ENCODE measurements at regions of chr17 and their contacts with region 1.

Region 1: DNA sequence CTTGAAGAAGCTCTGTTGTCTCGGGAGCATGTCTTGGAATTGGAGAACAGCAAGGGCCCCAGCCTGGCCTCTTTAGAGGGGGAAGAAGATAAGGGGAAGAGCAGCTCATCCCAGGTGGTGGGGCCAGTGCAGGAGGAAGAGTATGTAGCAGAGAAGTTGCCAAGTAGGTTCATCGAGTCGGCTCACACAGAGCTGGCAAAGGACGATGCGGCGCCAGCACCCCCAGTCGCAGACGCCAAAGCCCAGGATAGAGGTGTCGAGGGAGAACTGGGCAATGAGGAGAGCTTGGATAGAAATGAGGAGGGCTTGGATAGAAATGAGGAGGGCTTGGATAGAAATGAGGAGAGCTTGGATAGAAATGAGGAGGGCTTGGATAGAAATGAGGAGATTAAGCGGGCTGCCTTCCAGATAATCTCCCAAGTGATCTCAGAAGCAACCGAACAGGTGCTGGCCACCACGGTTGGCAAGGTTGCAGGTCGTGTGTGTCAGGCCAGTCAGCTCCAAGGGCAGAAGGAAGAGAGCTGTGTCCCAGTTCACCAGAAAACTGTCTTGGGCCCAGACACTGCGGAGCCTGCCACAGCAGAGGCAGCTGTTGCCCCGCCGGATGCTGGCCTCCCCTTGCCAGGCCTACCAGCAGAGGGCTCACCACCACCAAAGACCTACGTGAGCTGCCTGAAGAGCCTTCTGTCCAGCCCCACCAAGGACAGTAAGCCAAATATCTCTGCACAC is 21.2 kb downstream of the AKAP1 start:
- DNase-seq: peak in 1 of 2 experiments; percentile 70
- H3K4me3 ChIP-seq: no peak overlapping the region
- H3K27ac ChIP-seq: no peak overlapping the region
- H3K4me1 ChIP-seq: peaks cover 4 to 33% (median 18%) of the 10 kb centered on the region in 4 experiments; a peak in 6 of 7 replicates
- H3K27me3 ChIP-seq: no peaks in the 10 kb centered on the region
- CTCF ChIP-seq: peak; percentile 45 to 80 (median 79)
- EP300 ChIP-seq: no peak
- POLR2A ChIP-seq: no peak
- RAD21 ChIP-seq: peak; percentile 36 to 55

Region 2: GRCh38 chr17:57001548-57001947 is 104.7 kb before region 1 on chr17:
- CTCF ChIA-PET with region 1: interaction called, 112 read pairs
- POLR2A ChIA-PET with region 1: no interaction called
- DNase-seq: no peak
- H3K4me3 ChIP-seq: no peak overlapping the region
- H3K27ac ChIP-seq: no peak overlapping the region
- H3K4me1 ChIP-seq: peaks cover 0 to 4% (median 0%) of the 10 kb centered on the region in 4 experiments; a peak in 1 of 7 replicates
- H3K27me3 ChIP-seq: no peaks in the 10 kb centered on the region
- CTCF ChIP-seq: peak; percentile 46 to 55 (median 54)
- EP300 ChIP-seq: no peak
- POLR2A ChIP-seq: no peak
- RAD21 ChIP-seq: peak; percentile 69 to 79

Region 3: GRCh38 chr17:57045868-57046704 is 60.2 kb before region 1 on chr17:
- CTCF ChIA-PET with region 1: interaction called, 58 read pairs
- POLR2A ChIA-PET with region 1: interaction called, 3 read pairs
- DNase-seq: no peak
- H3K4me3 ChIP-seq: no peak overlapping the region
- H3K27ac ChIP-seq: no peak overlapping the region
- H3K4me1 ChIP-seq: peaks cover 0 to 2% (median under 1%) of the 10 kb centered on the region in 4 experiments; a peak in 2 of 7 replicates
- H3K27me3 ChIP-seq: no peaks in the 10 kb centered on the region
- CTCF ChIP-seq: no peak
- EP300 ChIP-seq: no peak
- POLR2A ChIP-seq: no peak
- RAD21 ChIP-seq: no peak

Region 4: DNA sequence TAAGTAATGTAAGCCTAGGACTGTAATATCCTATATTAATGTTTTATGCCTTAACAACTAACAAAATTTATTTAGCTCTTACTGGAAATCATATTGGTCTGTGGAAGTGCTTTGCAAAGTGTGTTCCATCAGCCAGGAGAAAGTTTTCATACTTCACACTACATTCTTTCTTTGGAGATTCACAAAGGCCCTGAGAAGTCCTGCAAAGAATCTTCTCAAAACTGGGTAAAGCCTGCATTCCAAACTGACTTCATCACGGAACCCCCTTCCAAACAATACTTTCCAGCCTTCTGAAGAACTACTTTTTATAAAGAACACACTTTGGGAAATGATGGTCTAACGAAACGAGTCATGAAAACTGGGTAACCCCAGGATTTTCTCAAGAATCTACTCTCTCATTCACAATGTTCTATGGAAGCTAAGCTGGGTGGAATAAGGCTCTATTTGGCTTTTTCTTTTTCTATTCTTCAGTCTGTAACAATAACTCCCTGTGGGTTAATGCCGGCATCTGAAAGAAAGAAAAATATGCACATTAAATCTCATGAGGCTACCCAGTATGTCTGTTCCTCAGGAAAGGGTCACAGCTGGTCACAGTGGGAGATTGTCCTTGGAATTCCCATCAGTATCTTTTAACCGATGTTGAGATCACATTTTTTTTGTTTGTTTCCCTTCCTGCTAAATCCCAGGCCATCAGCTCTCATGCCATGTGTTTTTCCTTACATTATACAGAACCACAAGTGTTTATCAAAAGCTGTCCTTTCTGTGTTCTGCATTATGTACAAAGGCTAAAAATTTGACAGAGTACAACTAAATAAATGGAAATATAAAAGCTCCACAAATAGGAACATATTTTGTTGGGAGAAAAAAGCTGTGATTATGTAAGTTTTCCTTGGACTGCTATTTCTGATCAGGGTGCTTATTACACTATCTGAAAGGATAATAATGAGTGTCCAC is 34.0 kb before region 1 on chr17:
- CTCF ChIA-PET with region 1: interaction called, 15 read pairs
- POLR2A ChIA-PET with region 1: no interaction called
- DNase-seq: no peak
- H3K4me3 ChIP-seq: 0 out of 8 replicates have a peak overlapping the region, but pooled peaks of 1 of the 4 experiments have one; percentile 9
- H3K27ac ChIP-seq: no peak overlapping the region; the same call in 1 of the 2 replicates
- H3K4me1 ChIP-seq: peaks cover 0 to 15% (median 8%) of the 10 kb centered on the region in 4 experiments; a peak in 5 of 7 replicates
- H3K27me3 ChIP-seq: no peaks in the 10 kb centered on the region
- CTCF ChIP-seq: no peak
- EP300 ChIP-seq: no peak
- POLR2A ChIP-seq: no peak
- RAD21 ChIP-seq: no peak

Region 5: DNA sequence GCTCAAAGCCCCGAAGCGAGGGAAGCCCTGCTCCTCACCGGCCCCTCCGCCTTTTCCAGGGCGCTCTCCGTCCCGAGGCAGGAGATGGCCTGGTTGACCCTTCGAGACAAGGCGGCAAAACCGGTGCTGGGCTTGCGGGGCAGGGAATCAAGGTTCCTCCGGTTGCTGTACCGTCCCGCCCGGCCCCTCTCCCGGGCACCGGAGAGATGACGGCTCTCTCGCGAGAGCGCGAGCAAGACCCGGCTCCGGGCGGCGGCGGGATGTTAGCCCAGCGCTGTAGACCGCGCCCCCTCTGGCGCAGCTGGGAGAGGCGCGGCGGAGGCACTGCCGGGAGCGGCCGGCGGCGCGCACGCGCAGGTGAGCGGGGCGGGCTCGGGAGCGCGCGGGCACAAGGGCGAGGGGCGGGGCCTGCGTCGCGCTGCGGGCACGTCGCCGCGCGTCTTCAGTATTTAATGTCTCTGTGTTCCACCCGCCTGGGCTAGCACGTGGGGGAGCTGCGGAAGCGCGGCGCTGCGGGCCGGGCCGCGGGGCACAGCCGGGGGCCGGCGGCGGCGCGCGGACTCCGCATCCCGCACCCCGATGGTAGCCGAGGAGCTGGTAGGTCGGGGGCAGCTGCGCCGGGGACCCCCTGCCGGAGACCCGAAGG is 21.3 kb before region 1 on chr17 and contains the start of gene AKAP1:
- CTCF ChIA-PET with region 1: interaction called, 34 read pairs
- POLR2A ChIA-PET with region 1: interaction called, 13 read pairs
- DNase-seq: peak; percentile 80 to 95
- H3K4me3 ChIP-seq: peak within 1 kb of the TSS; percentile 68 to 86 (median 84)
- H3K27ac ChIP-seq: peak within 1 kb of the TSS; percentile 92
- H3K4me1 ChIP-seq: peaks cover 5 to 21% (median 15%) of the 10 kb centered on the region in 4 experiments; a peak in 6 of 7 replicates
- H3K27me3 ChIP-seq: no peaks in the 10 kb centered on the region; a peak in 1 of 7 replicates
- CTCF ChIP-seq: peak; percentile 38 to 51 (median 43)
- EP300 ChIP-seq: no peak
- POLR2A ChIP-seq: peak; percentile 33 to 83
- RAD21 ChIP-seq: peak; percentile 31 to 53; a peak in 3 of 4 replicates
- total RNA-seq, gene AKAP1: 110 and 120 TPM in 2 replicates

Region 6: GRCh38 chr17:57092171-57092570 is 14.1 kb before region 1 on chr17:
- CTCF ChIA-PET with region 1: interaction called, 57 read pairs
- POLR2A ChIA-PET with region 1: interaction called, 13 read pairs
- DNase-seq: no peak
- H3K4me3 ChIP-seq: no peak overlapping the region
- H3K27ac ChIP-seq: no peak overlapping the region
- H3K4me1 ChIP-seq: peaks cover 18 to 46% (median 36%) of the 10 kb centered on the region in 4 experiments
- H3K27me3 ChIP-seq: no peaks in the 10 kb centered on the region
- CTCF ChIP-seq: no peak
- EP300 ChIP-seq: no peak
- POLR2A ChIP-seq: no peak
- RAD21 ChIP-seq: no peak

Region 7: GRCh38 chr17:57121338-57122042 is 15.2 kb after region 1 on chr17:
- CTCF ChIA-PET with region 1: interaction called, 34 read pairs
- POLR2A ChIA-PET with region 1: interaction called, 4 read pairs
- DNase-seq: no peak
- H3K4me3 ChIP-seq: no peak overlapping the region
- H3K27ac ChIP-seq: no peak overlapping the region
- H3K4me1 ChIP-seq: no peaks in the 10 kb centered on the region
- H3K27me3 ChIP-seq: no peaks in the 10 kb centered on the region
- CTCF ChIP-seq: peak; percentile 55 to 62 (median 59)
- EP300 ChIP-seq: no peak
- POLR2A ChIP-seq: no peak
- RAD21 ChIP-seq: peak; percentile 53 to 66

Measured in H1 (cell line).